Activated naive CD4-positive, alpha-beta T cell treated with anti-CD3 and anti-CD28 coated beads, Interleukin-2, amount 10 ng/mL, durations not matched to agents 7 days and 5 days (primary cell): ENCODE measurements at regions of chr14 and their contacts with region 1.

Region 1: DNA sequence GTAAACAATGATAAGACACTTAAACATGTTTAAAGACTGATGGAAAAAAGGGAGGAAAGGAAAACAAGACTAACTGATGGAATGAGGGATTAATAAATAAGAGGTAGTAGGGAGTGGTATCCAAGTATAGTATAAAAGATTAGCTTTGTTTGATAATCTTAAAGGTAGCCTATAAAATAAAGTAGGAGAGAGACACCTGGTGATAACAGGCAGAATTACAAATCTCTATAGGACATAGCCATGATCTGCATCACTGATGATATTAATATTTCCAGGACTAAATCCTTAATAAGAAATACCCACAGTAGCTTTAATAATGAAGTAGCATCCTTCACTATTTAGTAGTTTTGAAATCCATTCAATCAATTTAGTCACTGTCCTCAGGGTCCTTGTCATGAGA is 30.4 kb downstream of the DLGAP5 start:
- DNase-seq: no peak
- H3K4me3 Mint-ChIP-seq: no peak overlapping the region
- H3K27ac Mint-ChIP-seq: no peak overlapping the region
- H3K4me1 Mint-ChIP-seq: peaks cover 15% of the 10 kb centered on the region
- H3K27me3 Mint-ChIP-seq: no peaks in the 10 kb centered on the region

Region 2: GRCh38 chr14:55088356-55088755 is 72.6 kb before region 1 on chr14:
- CTCF ChIA-PET with region 1: interaction called, 35 read pairs
- DNase-seq: no peak
- H3K4me3 Mint-ChIP-seq: no peak overlapping the region
- H3K27ac Mint-ChIP-seq: no peak overlapping the region
- H3K4me1 Mint-ChIP-seq: peaks cover 20% of the 10 kb centered on the region
- H3K27me3 Mint-ChIP-seq: peaks cover 17% of the 10 kb centered on the region

Region 3: GRCh38 chr14:55094321-55095157 is 66.5 kb before region 1 on chr14:
- CTCF ChIA-PET with region 1: interaction called, 35 read pairs
- DNase-seq: no peak
- H3K4me3 Mint-ChIP-seq: no peak overlapping the region
- H3K27ac Mint-ChIP-seq: no peak overlapping the region
- H3K4me1 Mint-ChIP-seq: peaks cover 42% of the 10 kb centered on the region
- H3K27me3 Mint-ChIP-seq: no peaks in the 10 kb centered on the region